ENCODE measurements at regions of chr1 and their contacts with region 1.

Region 1: DNA sequence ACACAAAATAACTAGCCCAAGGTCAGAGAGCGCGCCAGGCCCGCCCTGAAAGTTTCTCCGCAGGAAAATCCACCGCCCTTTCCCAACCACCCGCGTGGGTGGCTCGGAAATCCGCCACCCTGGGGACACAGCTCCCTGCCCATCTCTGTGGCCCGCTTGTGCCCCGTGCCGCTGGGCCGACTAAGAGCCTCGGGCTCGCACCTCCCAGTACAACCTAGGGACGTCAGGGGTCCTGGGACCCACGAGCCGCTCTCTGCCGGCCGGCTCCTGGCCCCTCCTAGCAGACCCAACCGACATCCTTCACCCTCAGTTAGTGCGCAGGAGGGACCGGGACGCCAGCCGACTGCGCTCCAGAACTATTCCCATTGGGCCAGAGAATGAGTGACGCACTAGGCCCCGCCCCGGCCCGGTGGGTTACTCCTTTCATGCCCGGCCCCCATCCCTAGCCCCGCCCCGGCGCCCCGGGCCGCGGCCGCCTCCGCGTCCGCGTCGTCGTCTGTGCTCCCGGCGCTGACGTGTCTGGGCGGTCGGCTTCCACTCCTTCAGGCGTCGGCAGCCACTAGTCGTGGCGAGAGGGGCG is 395 bp upstream of the UAP1 start:
- DNase-seq: peak; percentile 98
- H3K4me3 ChIP-seq: peak overlapping the region; percentile 82 to 93 (median 88)
- H3K27ac ChIP-seq: peak overlapping the region; percentile 90
- H3K4me1 ChIP-seq: peaks cover 15% of the 10 kb centered on the region
- H3K27me3 ChIP-seq: no peaks in the 10 kb centered on the region
- CTCF ChIP-seq: no peak

Region 2: GRCh38 chr1:162357681-162358266 is 203.4 kb before region 1 on chr1:
- CTCF ChIA-PET with region 1: no interaction called
- dilution Hi-C with region 1: no loop called
- in situ Hi-C with region 1: no loop called
- intact Hi-C with region 1: loop called (anchors 10 kb)
- DNase-seq: peak; percentile 33
- H3K4me3 ChIP-seq: no peak overlapping the region
- H3K27ac ChIP-seq: no peak overlapping the region
- H3K4me1 ChIP-seq: no peaks in the 10 kb centered on the region
- H3K27me3 ChIP-seq: no peaks in the 10 kb centered on the region
- CTCF ChIP-seq: peak; percentile 51 to 72

Region 3: GRCh38 chr1:162497723-162498500 is 63.2 kb before region 1 on chr1 and contains the start of gene UHMK1:
- CTCF ChIA-PET with region 1: no interaction called
- dilution Hi-C with region 1: no loop called
- in situ Hi-C with region 1: loop called in 1 of 2 experiments (anchors 10 kb)
- intact Hi-C with region 1: loop called (anchors 1 kb)
- DNase-seq: peak; percentile 84
- H3K4me3 ChIP-seq: peak within 1 kb of the TSS; percentile 80 to 96 (median 81)
- H3K27ac ChIP-seq: peak within 1 kb of the TSS; percentile 67
- H3K4me1 ChIP-seq: peaks cover 12% of the 10 kb centered on the region
- H3K27me3 ChIP-seq: no peaks in the 10 kb centered on the region
- CTCF ChIP-seq: peak in 1 of 2 donors; percentile 2
- total RNA-seq, gene UHMK1: 59.5 to 97.5 TPM

Region 4: DNA sequence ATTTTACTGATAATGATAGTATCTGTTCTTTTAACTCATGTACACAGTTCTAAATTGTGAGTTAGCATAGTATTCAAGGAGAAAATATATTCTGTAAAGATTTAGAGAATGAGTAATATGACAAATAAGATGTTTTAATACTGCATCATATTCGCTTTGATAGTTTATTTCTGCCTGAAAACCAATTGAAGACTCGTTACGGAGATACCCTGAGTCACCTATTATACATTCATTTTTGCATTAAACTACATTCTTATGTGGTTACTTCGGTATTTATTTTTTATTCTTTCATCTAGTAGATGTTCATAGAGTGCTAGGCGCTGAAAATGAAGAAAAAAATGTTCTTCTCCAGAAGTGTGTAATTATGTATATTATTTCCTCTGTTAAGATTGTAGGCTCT is 58.2 kb before region 1 on chr1:
- CTCF ChIA-PET with region 1: no interaction called
- dilution Hi-C with region 1: no loop called
- in situ Hi-C with region 1: loop called in 1 of 2 experiments (anchors 10 kb)
- intact Hi-C with region 1: no loop called
- DNase-seq: no peak
- H3K4me3 ChIP-seq: no peak overlapping the region
- H3K27ac ChIP-seq: no peak overlapping the region
- H3K4me1 ChIP-seq: peaks cover 9% of the 10 kb centered on the region
- H3K27me3 ChIP-seq: no peaks in the 10 kb centered on the region
- CTCF ChIP-seq: no peak

Region 5: DNA sequence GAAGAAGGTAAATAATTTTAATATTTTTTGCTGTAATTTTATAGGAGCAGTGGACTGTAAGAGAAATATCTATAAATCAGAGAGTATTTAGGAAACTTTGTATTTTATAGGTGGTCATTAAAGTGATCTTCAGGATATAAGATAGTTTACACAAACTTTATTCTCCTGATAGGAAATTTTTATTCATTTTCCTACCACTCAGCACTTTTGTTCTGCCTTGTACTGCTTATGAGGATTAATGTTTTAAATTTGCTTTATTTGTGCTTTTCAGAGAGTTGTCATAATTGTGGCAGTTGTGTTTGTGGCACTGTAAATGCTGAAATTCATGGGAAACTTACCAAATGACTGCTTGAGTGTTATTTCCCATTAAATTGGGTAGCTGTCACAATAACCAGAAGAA is 33.8 kb before region 1 on chr1:
- CTCF ChIA-PET with region 1: no interaction called
- dilution Hi-C with region 1: no loop called
- in situ Hi-C with region 1: no loop called
- intact Hi-C with region 1: loop called (anchors 5 kb)
- DNase-seq: no peak
- H3K4me3 ChIP-seq: no peak overlapping the region
- H3K27ac ChIP-seq: no peak overlapping the region
- H3K4me1 ChIP-seq: no peaks in the 10 kb centered on the region
- H3K27me3 ChIP-seq: no peaks in the 10 kb centered on the region
- CTCF ChIP-seq: no peak

Region 6: DNA sequence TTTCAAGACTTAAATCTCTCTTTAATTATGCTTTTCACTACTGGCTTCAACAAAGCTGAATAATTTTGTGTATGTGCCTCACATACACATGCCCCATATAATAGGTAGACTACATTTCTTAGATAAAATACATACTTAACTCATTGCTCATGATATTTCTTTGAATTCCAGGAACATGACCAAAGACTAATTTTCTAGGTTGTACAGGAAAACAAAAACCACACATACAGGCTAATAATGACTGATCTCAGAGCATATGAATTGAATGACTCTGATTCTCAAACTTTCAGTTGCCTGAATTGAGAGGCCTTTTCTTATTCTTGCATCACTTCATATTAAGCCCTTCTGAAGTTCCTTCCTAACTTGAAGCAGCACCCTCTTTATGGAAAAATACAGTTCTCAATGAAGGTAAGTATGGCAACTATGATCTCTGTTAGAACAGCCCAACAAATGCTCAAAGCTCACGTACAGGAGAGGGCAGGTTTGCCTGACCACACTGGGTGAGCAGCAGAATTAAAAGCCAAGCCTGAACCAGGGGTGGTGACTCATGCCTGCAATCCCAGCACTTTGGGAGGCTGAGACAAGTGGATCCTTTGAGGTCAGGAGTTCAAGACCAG is 22.2 kb before region 1 on chr1:
- CTCF ChIA-PET with region 1: no interaction called
- dilution Hi-C with region 1: no loop called
- in situ Hi-C with region 1: no loop called
- intact Hi-C with region 1: loop called (anchors 1 kb)
- DNase-seq: peak; percentile 93
- H3K4me3 ChIP-seq: no peak overlapping the region
- H3K27ac ChIP-seq: peak overlapping the region; percentile 76
- H3K4me1 ChIP-seq: peaks cover 42% of the 10 kb centered on the region
- H3K27me3 ChIP-seq: no peaks in the 10 kb centered on the region
- CTCF ChIP-seq: no peak